CD14-positive monocyte (primary cell): ENCODE measurements at regions of chr17 and their contacts with region 1.

Region 1: DNA sequence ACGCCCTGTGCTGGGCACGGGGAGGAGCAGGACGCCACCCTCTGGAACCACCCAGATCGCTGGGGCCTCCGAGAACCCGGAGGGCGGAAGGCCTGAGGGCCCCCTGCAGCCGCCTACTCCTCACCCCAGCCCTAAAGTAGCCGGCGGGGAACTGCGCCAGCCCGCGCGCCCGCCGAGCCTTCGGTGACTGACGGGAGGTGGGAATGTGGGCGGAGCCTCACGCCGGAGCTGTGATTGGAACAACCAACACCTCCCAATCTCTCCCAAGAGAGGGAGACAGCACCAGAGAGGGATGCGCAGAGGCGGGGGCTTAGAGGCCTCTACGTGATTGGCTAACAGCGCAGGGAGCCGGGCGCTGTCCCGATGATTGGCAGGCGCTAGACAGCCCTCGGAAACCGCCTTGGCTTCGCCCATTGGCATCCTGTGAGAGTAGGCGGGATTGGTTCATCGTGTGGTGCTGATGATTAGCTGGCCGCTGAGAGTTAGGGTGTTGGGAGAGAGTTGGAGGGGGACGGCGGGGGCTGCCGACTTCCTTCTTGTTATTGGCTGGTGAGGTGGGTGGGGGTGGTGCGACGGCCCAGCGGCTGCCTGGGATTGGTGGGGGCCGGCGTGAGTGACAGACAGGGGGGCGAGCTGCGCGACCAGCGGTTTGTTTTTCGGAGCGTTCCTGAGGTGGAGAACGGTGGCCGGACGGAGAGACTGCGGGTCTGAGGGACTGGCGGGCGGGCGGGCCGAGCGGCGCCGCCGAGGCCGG is at the start of gene MAP3K3:
- DNase-seq: peak; percentile 99 to 100 (median 100)
- H3K4me3 ChIP-seq: peak within 1 kb of the TSS; percentile 72 to 96 (median 92)
- H3K4me3 Mint-ChIP-seq: peak within 1 kb of the TSS; percentile 99
- H3K27ac ChIP-seq: peak within 1 kb of the TSS; percentile 67 to 74
- H3K27ac Mint-ChIP-seq: peak within 1 kb of the TSS; percentile 81 to 95 (median 92)
- H3K4me1 ChIP-seq: peaks cover 32 to 44% of the 10 kb centered on the region in 2 donors
- H3K4me1 Mint-ChIP-seq: peaks cover 39% of the 10 kb centered on the region
- H3K27me3 ChIP-seq: no peaks in the 10 kb centered on the region
- H3K27me3 Mint-ChIP-seq: peaks cover 4 to 10% (median 7%) of the 10 kb centered on the region in 3 donors
- CTCF ChIP-seq: peak; percentile 7
- polyA plus RNA-seq, gene MAP3K3: 52.2 to 219 (median 63.6) TPM

Region 2: DNA sequence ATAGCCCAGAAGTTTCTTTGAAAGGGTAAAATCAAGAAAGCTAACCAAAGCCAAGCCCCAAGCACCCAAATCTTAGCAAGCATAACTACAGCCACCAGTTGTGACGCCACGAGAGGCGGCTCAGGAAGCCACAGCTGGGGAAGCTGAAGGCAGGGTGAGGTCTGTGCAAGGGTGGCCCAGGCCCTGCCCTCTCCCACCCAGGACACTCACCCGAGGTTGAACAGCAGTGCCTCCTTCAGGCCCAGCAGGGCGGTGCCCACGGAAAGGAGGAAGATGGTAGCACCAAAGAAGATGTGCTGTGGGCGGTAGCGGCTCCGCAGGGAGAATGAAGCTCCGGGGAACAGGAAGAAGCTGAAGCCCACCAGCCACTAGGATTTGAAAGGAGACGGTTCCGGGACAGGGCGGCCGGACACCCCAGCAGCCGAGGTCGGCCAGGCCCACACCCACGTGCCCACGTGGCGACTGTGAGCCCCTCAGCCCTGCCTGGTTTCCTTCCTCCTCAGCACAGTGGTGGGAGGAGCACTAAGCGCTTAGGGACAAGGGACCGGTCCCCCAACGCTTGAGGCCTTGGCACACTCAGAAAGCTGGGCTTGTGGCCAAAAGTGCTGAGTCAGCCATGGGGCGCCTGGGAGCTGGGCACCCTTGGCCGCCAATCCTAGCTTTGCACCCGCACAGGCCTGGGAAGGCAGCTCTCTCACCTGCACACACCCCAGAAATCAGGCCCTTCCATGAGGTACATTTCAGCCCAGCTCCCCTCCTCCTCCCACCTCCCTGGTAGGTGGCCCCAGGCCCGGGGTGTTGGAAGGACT is 186.9 kb before region 1 on chr17:
- intact Hi-C with region 1: loop called in 1 of 2 experiments (anchors 5 kb)
- DNase-seq: peak; percentile 55 to 65 (median 59)
- H3K4me3 ChIP-seq: peak overlapping the region in 2 of 3 experiments; percentile 2 to 66
- H3K4me3 Mint-ChIP-seq: peak overlapping the region; percentile 71 to 80
- H3K27ac ChIP-seq: peak overlapping the region in 1 of 2 donors; percentile 65
- H3K27ac Mint-ChIP-seq: peak overlapping the region; percentile 40 to 78 (median 63)
- H3K4me1 ChIP-seq: peaks cover 42 to 51% of the 10 kb centered on the region in 2 donors
- H3K4me1 Mint-ChIP-seq: peaks cover 42% of the 10 kb centered on the region
- H3K27me3 ChIP-seq: no peaks in the 10 kb centered on the region
- H3K27me3 Mint-ChIP-seq: peaks cover 2 to 11% (median 6%) of the 10 kb centered on the region in 3 donors
- CTCF ChIP-seq: peak; percentile 70

Region 3: GRCh38 chr17:63549946-63550807 is 71.8 kb before region 1 on chr17 and contains the start of gene DCAF7:
- intact Hi-C with region 1: loop called (anchors 1 to 5 kb)
- DNase-seq: peak; percentile 99 to 100 (median 100)
- H3K4me3 ChIP-seq: peak within 1 kb of the TSS; percentile 74 to 99 (median 81)
- H3K4me3 Mint-ChIP-seq: peak within 1 kb of the TSS; percentile 96 to 97
- H3K27ac ChIP-seq: peak within 1 kb of the TSS; percentile 88 to 96
- H3K27ac Mint-ChIP-seq: peak within 1 kb of the TSS; percentile 96 to 98 (median 97)
- H3K4me1 ChIP-seq: peaks cover 35 to 48% of the 10 kb centered on the region in 2 donors
- H3K4me1 Mint-ChIP-seq: peaks cover 48% of the 10 kb centered on the region
- H3K27me3 ChIP-seq: no peaks in the 10 kb centered on the region
- H3K27me3 Mint-ChIP-seq: peaks cover 0 to 3% (median 3%) of the 10 kb centered on the region in 3 donors
- CTCF ChIP-seq: no peak
- polyA plus RNA-seq, gene DCAF7: 41.9 to 89.4 (median 58.1) TPM

Region 4: DNA sequence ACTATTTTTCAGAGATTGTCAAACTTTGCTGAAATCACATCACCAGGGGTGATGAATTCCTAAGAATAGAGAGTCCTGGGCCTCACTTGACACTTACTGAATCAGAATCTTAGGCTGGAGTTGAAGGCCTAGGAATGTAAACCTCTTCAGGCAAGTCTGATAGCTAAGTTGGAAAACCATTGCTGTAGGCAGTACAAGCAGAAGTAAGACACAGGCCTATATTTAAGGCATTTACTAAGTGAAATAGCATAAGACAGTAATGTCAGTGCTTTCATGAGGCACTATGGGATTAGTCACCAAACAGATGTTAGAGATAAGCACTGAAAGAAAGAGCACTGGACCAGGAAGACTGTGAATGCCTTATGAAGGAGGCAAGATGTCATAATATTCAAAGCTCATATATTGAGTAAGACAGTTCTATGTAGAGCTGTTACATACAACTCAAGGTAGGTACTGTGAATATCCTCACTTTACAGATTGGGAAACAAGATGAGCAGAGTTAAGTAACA is 50.1 kb before region 1 on chr17:
- intact Hi-C with region 1: no loop called
- DNase-seq: no peak
- H3K4me3 ChIP-seq: no peak overlapping the region
- H3K4me3 Mint-ChIP-seq: no peak overlapping the region
- H3K27ac ChIP-seq: no peak overlapping the region
- H3K27ac Mint-ChIP-seq: peak overlapping the region in 1 of 7 donors; percentile 28
- H3K4me1 ChIP-seq: no peaks in the 10 kb centered on the region
- H3K4me1 Mint-ChIP-seq: no peaks in the 10 kb centered on the region
- H3K27me3 ChIP-seq: no peaks in the 10 kb centered on the region
- H3K27me3 Mint-ChIP-seq: no peaks in the 10 kb centered on the region
- CTCF ChIP-seq: no peak

Region 5: DNA sequence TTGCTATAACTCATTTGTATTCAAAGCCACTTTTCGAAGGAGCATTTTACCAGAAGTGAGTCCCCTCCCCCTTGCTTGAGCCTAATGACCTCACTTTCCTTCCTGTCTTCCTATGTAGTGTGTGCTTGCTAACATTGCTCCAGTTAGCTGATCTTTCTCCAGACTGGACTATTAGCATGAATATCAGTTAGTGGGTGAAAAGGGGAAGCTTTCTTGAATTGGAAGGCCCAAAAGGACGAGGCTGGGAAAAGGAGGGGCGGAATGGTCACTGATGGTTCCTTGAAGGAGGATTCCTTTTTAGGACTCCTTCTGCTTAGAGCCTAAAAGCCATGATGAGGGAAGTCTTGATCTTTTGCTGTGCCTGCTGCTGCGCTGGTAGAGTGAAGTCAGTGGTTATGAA is 12.2 kb after region 1 on chr17:
- intact Hi-C with region 1: loop called in 1 of 2 experiments (anchors 2 kb)
- DNase-seq: peak; percentile 34 to 51 (median 38)
- H3K4me3 ChIP-seq: peak overlapping the region in 1 of 3 experiments; percentile 27
- H3K4me3 Mint-ChIP-seq: peak overlapping the region in 1 of 2 donors; percentile 68
- H3K27ac ChIP-seq: peak overlapping the region; percentile 8 to 78
- H3K27ac Mint-ChIP-seq: peak overlapping the region; percentile 64 to 91 (median 85)
- H3K4me1 ChIP-seq: peaks cover 36 to 54% of the 10 kb centered on the region in 2 donors
- H3K4me1 Mint-ChIP-seq: peaks cover 70% of the 10 kb centered on the region
- H3K27me3 ChIP-seq: no peaks in the 10 kb centered on the region
- H3K27me3 Mint-ChIP-seq: no peaks in the 10 kb centered on the region
- CTCF ChIP-seq: no peak

Region 6: DNA sequence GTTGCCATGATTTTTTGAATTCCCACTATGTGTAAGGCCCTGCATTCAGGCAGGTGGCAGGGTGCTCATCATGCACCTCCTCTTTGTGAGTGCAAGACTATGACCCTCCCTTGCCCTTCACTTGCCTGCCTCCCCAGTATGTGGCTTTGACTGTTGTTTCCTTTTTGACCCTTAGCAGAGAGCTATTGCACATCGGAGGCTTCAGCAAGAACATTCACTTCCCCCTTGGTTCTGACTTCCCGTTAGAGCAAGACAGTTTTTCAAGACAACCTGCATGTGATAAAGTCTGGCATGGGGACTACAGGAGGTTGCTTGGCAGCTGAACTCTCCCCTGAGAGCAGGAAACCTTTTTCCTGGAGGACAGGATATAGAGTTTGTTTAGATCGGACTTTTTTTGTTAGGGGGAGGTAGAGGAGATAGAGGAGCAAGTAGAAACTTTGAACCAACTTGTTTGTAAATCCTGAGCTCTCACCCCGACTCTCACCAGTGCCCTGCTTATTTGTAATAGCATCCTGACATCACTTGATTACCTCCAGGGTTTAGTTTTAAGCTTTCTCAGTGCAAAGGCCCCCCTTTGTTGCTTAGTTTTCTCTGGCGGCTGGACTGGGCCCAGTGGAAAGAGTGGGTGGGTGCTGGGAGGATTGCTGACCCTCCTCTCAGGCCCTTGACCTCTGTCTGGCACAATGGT is 43.7 kb after region 1 on chr17:
- intact Hi-C with region 1: loop called (anchors 5 kb)
- DNase-seq: peak; percentile 74 to 82 (median 75)
- H3K4me3 ChIP-seq: peak overlapping the region in 1 of 3 experiments; percentile 53
- H3K4me3 Mint-ChIP-seq: peak overlapping the region; percentile 38 to 86
- H3K27ac ChIP-seq: peak overlapping the region; percentile 75 to 83
- H3K27ac Mint-ChIP-seq: peak overlapping the region; percentile 88 to 98 (median 97)
- H3K4me1 ChIP-seq: peaks cover 34 to 39% of the 10 kb centered on the region in 2 donors
- H3K4me1 Mint-ChIP-seq: peaks cover 37% of the 10 kb centered on the region
- H3K27me3 ChIP-seq: no peaks in the 10 kb centered on the region
- H3K27me3 Mint-ChIP-seq: no peaks in the 10 kb centered on the region
- CTCF ChIP-seq: no peak

Region 7: DNA sequence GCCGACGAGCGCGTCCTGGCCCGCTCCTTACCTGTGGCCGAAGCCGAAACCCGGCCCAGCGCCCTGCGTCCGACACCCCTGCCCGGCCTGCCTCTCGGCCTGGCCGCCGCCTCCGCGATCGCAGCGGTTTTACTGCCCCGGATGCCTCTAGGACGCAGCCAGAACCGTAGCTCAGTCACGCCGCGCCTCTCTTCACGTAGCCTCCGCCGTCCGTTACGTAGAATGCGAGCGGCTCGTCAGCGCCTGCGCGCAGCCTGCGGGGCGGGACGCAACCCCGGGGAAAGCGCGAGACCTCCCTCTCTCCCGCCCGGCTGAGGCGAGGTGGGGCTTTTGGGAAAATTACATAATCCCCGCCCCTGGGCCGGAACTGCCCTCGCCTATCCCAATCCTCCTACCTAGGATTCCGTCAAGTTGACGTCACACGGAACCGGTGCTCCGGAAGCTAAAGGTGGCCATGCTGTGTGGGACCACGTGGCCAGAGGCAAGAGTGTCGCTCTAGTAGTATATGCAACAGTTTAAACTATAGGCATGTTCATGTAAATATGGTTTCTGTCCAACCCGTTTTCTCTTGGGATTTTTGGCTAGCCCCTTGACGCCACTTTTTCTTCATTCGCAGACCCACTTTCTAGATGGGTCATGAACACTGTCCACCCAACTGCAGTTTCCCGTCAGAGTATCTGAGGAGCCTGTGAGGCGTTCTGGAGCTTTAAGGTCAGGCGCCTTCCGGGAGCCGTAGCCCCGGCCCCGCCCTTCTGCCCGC is 151.6 kb after region 1 on chr17 and contains the start of gene CCDC47:
- intact Hi-C with region 1: loop called in 1 of 2 experiments (anchors 10 kb)
- DNase-seq: peak; percentile 98 to 99 (median 99)
- H3K4me3 ChIP-seq: peak within 1 kb of the TSS; percentile 93 to 96 (median 94)
- H3K4me3 Mint-ChIP-seq: peak within 1 kb of the TSS; percentile 92 to 96
- H3K27ac ChIP-seq: peak within 1 kb of the TSS; percentile 93 to 94
- H3K27ac Mint-ChIP-seq: peak within 1 kb of the TSS; percentile 99 to 100 (median 99)
- H3K4me1 ChIP-seq: peaks cover 39 to 54% of the 10 kb centered on the region in 2 donors
- H3K4me1 Mint-ChIP-seq: peaks cover 59% of the 10 kb centered on the region
- H3K27me3 ChIP-seq: no peaks in the 10 kb centered on the region
- H3K27me3 Mint-ChIP-seq: peaks cover 0 to 1% (median 0%) of the 10 kb centered on the region in 3 donors
- CTCF ChIP-seq: no peak
- polyA plus RNA-seq, gene CCDC47: 15.2 to 56.4 (median 43.0) TPM

Region 8: DNA sequence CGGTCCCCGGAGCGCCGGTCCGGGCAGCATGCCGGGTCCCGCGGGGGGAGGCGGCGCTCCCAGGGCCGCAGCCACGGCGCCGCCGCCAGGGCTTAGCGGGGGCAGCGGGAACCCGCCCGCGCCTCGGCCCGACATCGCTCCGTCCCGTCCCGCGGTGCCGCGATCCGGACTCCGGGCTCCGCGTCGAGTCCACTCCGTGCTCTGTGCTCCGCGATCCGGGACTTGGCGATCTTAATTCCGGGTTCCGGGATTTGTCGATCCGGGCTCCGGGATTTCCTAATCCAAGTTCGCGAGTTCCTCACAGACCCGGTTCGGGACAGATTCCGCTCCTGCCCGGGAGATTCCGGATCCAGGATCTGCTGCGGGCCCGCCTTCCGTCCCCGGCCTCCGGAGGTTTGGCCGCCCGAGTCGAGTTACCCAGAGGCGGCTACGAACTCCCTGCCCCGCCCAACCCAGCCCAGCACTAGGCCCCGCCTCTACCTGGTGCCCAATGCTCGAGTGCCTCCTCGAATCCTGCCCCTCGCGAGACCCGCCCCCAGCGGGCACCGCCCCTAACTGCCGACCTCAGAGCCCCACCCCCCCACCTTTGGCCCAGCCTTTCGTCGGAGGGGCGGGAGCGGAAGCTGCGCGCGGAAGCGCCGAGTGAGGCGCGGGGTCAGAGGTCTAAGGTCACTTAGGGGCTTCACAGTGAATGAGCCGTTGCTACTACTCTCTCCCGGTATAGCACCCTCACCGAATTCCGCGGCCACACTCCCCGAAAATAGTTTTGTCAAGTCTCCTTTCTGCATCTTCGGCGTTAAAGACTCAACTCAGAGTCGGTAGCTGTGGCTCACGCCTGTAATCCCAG is 220.8 kb after region 1 on chr17 and contains the start of gene SMARCD2:
- intact Hi-C with region 1: loop called in 1 of 2 experiments (anchors 5 kb)
- DNase-seq: peak; percentile 94 to 99 (median 98)
- H3K4me3 ChIP-seq: peak within 1 kb of the TSS; percentile 57 to 98 (median 92)
- H3K4me3 Mint-ChIP-seq: peak within 1 kb of the TSS; percentile 98
- H3K27ac ChIP-seq: peak within 1 kb of the TSS; percentile 84 to 85
- H3K27ac Mint-ChIP-seq: peak within 1 kb of the TSS; percentile 92 to 98 (median 96)
- H3K4me1 ChIP-seq: peaks cover 46 to 51% of the 10 kb centered on the region in 2 donors
- H3K4me1 Mint-ChIP-seq: peaks cover 46% of the 10 kb centered on the region
- H3K27me3 ChIP-seq: no peaks in the 10 kb centered on the region
- H3K27me3 Mint-ChIP-seq: peaks cover 0 to 3% (median 1%) of the 10 kb centered on the region in 3 donors
- CTCF ChIP-seq: no peak
- polyA plus RNA-seq, gene SMARCD2: 60.2 to 77.9 (median 64.0) TPM